Activated T-helper 1 cell treated with anti-CD3 and anti-CD28 coated beads, Interleukin-12 subunit alpha, Interleukin-12 subunit beta, Interleukin-2, Interleukin-4 antibody, amounts not matched to agents 30 ng/mL and 10 ng/mL and 1 ng/mL, durations not matched to agents 14 hours and 24 hours and 36 hours (primary cell): ENCODE measurements at regions of chr10 and their contacts with region 1.

Region 1: DNA sequence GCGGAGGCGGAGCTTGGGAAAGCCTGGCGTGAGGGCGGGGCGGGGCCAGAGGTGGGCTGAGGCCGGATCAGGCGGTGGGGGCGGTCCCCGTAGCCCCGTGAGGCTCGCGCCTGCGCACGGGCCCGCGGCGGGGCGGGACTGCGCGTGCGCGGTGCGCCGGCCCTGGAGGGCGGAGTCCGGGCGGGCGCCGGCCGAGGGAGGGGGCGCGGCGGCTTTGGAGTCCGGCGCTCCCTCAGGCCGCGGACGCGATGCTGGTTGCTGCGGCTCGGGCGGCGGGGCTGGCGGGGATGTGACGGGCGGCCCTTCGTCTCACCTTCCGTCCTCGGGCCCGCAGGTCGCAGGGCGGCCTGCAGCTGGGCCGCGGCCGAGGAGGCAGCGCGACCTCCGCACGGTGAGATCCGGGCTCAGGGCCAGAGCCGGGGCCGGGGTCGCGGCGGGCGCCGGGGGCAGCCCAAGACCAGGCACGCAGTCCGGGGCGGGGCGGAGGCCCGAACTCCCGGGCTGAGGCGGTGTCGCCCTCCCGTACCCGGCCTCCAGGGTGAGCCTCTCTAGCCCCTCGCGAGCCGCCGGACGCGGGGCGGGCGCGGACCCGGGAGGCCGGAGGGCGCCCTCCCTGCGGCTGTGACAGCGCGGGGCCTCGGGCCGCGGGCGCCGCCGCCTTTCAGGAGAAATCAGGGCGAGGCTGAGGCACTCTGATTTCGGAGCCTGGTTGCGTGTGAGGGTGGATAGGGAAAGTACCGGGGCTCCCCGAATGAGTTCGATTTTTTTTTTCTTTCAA is at the start of gene CCSER2:
- DNase-seq: peak; percentile 88
- H3K4me3 Mint-ChIP-seq: peak within 1 kb of the TSS; percentile 95
- H3K27ac Mint-ChIP-seq: peak within 1 kb of the TSS; percentile 99
- H3K4me1 Mint-ChIP-seq: peaks cover 39% of the 10 kb centered on the region
- H3K27me3 Mint-ChIP-seq: no peaks in the 10 kb centered on the region
- total RNA-seq, gene CCSER2: 52.3 and 53.6 TPM in 2 replicates

Region 2: DNA sequence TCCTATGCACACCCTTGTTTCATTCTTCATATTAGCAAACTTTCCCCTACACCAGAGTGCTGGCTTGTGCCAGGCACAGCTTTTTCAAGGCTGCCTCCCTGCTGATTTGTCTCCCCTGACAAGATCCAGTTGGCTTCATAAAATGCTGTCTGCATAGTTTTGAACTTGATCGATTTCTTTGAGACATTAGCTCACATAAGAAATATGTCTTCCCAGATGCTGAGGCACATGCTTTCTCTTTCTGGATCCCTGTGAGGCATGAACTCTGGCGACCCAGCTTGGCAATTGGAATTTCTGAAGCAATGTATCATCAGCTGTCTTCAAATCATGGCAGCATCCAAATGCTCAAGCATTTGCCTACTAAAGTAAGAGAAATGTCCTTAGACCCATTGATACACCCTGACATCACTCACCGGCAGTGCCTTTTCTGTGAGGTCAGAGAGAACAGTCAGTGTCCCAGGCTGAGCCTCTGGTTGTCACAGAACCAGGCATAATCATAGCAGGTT is 805.7 kb before region 1 on chr10:
- intact Hi-C with region 1: no loop called
- DNase-seq: no peak
- H3K4me3 Mint-ChIP-seq: no peak overlapping the region
- H3K27ac Mint-ChIP-seq: no peak overlapping the region
- H3K4me1 Mint-ChIP-seq: no peaks in the 10 kb centered on the region
- H3K27me3 Mint-ChIP-seq: no peaks in the 10 kb centered on the region

Region 3: GRCh38 chr10:84139126-84140035 is 189.2 kb before region 1 on chr10 and contains the start of gene GHITM:
- intact Hi-C with region 1: loop called (anchors 1 kb)
- DNase-seq: peak; percentile 99
- H3K4me3 Mint-ChIP-seq: peak within 1 kb of the TSS; percentile 92
- H3K27ac Mint-ChIP-seq: peak within 1 kb of the TSS; percentile 88
- H3K4me1 Mint-ChIP-seq: peaks cover 27% of the 10 kb centered on the region
- H3K27me3 Mint-ChIP-seq: no peaks in the 10 kb centered on the region
- total RNA-seq, gene GHITM: 140 and 142 TPM in 2 replicates

Region 4: DNA sequence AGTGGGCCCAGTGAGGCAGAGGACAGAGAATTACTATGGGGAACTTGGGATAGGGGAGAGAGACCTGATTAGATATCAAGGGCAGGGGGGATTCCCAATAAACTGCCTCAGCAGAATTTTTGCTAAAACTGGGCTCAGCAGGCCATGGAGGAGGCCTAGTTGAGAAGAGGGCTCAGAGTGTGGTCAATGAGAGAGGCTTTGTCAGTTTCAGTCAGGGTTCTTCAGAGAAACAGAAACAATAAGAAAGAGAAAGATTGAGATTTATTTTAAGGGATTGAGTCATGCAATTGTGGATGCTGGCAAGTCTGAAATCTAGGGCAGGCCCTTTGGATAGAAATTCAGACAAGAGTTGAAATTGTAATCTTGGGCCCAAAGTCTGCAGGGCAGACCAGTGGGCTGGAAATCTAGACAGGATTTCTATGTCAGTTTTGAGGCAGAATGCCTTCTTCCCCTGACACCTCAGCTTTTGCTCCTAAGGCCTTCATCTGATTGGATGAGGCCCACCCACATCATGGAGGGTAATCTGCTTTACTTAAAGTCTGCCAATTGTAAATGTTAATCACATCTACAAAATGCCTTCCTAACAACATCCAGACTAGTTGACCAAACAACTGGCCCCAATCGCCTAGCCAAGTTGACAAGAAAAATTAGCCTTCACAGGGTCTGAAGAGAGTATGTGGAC is 33.7 kb before region 1 on chr10:
- intact Hi-C with region 1: loop called (anchors 1 kb)
- DNase-seq: no peak
- H3K4me3 Mint-ChIP-seq: no peak overlapping the region
- H3K27ac Mint-ChIP-seq: no peak overlapping the region
- H3K4me1 Mint-ChIP-seq: peaks cover 22% of the 10 kb centered on the region
- H3K27me3 Mint-ChIP-seq: peaks cover 4% of the 10 kb centered on the region

Region 5: GRCh38 chr10:84308481-84309304 is 19.9 kb before region 1 on chr10:
- intact Hi-C with region 1: loop called (anchors 1 kb)
- DNase-seq: peak; percentile 37
- H3K4me3 Mint-ChIP-seq: peak overlapping the region; percentile 65
- H3K27ac Mint-ChIP-seq: peak overlapping the region; percentile 77
- H3K4me1 Mint-ChIP-seq: peaks cover 52% of the 10 kb centered on the region
- H3K27me3 Mint-ChIP-seq: peaks cover 1% of the 10 kb centered on the region

Region 6: GRCh38 chr10:84342584-84342983 is 14.0 kb after region 1 on chr10:
- intact Hi-C with region 1: loop called (anchors 1 kb)
- DNase-seq: no peak
- H3K4me3 Mint-ChIP-seq: peak overlapping the region; percentile 58
- H3K27ac Mint-ChIP-seq: peak overlapping the region; percentile 88
- H3K4me1 Mint-ChIP-seq: peaks cover 63% of the 10 kb centered on the region
- H3K27me3 Mint-ChIP-seq: no peaks in the 10 kb centered on the region